CD4-positive, alpha-beta T cell (primary cell): ENCODE measurements at regions of chr13 and their contacts with region 1.

Region 1: DNA sequence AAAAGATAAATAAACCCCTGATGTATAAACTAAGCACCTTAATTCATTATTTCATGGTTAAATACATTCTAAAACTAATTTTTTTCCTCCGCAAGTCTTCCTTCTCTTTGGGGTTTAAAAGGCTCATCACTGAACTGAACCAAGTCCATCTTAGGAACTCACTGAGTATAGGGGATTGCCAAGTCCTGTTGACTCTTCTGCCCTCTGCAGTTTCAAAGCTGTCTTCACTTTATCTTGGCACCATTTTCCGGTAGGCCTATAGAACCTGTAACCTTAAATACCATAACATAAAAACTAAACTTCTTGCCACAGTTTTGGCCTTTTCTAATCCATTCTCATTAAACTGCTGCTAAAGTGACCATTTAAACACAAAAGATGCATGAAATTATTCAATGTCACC is 66.5 kb upstream of the USPL1 start:
- DNase-seq: peak in 4 of 14 experiments; percentile 34 to 66 (median 57)
- ATAC-seq: peak; percentile 95
- H3K4me3 ChIP-seq: no peak overlapping the region
- H3K4me3 Mint-ChIP-seq: no peak overlapping the region
- H3K27ac ChIP-seq: no peak overlapping the region
- H3K27ac Mint-ChIP-seq: no peak overlapping the region
- H3K4me1 ChIP-seq: no peaks in the 10 kb centered on the region
- H3K4me1 Mint-ChIP-seq: peaks cover 3% of the 10 kb centered on the region
- H3K27me3 ChIP-seq: no peaks in the 10 kb centered on the region
- H3K27me3 Mint-ChIP-seq: no peaks in the 10 kb centered on the region
- CTCF ChIP-seq: peak; percentile 51

Region 2: GRCh38 chr13:30257468-30258099 is 293.6 kb before region 1 on chr13:
- CTCF ChIA-PET with region 1: no interaction called
- POLR2A ChIA-PET with region 1: no interaction called
- intact Hi-C with region 1: loop called in 1 of 2 experiments (anchors 5 kb)
- DNase-seq: no peak
- ATAC-seq: no peak
- H3K4me3 ChIP-seq: no peak overlapping the region
- H3K4me3 Mint-ChIP-seq: no peak overlapping the region
- H3K27ac ChIP-seq: no peak overlapping the region
- H3K27ac Mint-ChIP-seq: no peak overlapping the region
- H3K4me1 ChIP-seq: peaks cover 3% of the 10 kb centered on the region
- H3K4me1 Mint-ChIP-seq: peaks cover 17% of the 10 kb centered on the region
- H3K27me3 ChIP-seq: no peaks in the 10 kb centered on the region
- H3K27me3 Mint-ChIP-seq: no peaks in the 10 kb centered on the region
- CTCF ChIP-seq: no peak

Region 3: DNA sequence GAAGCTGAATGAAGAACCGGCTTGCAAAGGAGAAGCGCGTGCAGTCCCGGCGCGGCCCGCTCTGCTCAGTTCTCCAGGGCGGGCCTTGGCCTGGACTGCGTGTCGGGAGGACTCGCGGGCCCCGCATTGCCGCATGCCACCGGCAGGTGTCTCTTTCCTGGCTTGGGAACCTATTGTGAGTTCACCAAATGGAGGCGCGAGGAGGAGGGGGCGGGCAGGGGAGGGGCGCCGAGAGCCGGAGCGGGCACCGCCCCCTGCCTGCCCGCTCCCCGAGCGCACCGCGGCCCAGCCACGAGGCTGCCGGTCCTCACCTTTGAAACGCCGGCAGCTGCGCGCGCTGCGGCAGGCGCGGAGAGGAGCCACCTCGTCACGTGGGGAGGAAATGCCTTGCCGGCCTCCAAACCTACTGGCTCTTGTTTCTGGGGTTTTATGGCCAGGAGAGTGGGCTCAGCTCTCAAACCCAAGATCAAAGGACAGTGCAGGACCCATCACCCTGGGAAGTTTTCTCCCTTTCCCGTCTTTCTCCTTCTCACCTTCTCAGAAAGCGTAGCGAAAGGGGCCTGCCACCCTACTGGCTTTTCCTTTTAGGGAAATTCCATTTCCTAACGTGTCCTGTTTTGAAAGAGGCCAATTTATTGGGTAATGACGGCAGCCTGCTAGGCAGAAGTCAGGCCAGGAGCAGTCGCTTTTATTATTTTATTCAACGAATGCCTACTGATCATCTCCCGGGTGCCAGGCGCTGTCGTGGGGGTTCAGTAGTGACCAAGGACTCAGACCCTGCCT is 142.7 kb before region 1 on chr13:
- CTCF ChIA-PET with region 1: no interaction called
- POLR2A ChIA-PET with region 1: no interaction called
- intact Hi-C with region 1: loop called (anchors 1 to 5 kb)
- DNase-seq: peak; percentile 83 to 96 (median 88)
- ATAC-seq: peak; percentile 91
- H3K4me3 ChIP-seq: peak overlapping the region; percentile 37
- H3K4me3 Mint-ChIP-seq: peak overlapping the region; percentile 76
- H3K27ac ChIP-seq: peak overlapping the region in 1 of 2 donors; percentile 76
- H3K27ac Mint-ChIP-seq: peak overlapping the region; percentile 78
- H3K4me1 ChIP-seq: peaks cover 20% of the 10 kb centered on the region
- H3K4me1 Mint-ChIP-seq: peaks cover 40% of the 10 kb centered on the region
- H3K27me3 ChIP-seq: no peaks in the 10 kb centered on the region
- H3K27me3 Mint-ChIP-seq: no peaks in the 10 kb centered on the region
- CTCF ChIP-seq: peak; percentile 63

Region 4: DNA sequence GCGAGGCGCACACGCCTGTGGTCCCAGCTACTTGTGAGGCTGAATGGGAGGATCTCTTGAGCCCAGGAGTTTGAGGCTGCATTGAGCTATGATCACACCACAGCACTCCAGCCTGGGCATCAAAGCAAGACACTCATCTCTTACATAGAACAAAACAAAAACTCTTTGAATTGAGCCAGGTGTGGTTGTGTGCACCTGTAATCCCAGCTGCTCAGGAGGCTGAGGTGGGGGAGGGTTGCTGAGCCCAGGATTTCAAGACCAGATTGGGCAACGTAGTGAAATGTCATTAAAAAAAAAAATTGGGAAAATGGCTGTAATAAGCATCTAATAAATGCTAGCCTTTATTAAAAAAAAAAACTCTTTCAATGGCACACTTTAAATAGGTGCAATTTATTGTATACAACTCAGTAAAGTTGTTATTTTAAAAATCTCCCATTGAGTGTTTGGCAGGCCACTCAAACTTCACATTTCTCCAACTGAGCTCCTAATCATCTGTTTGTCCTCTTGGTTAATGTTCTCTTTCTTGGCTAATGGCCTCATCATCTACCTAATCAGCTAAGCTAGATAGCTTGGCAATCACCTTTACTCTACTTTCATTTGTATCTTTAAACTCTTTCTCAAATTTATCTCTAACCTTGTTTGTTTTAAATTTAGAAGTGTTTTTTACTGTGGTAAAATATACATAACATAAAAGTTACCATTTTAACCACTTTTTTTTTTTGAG is 57.4 kb before region 1 on chr13:
- CTCF ChIA-PET with region 1: no interaction called
- POLR2A ChIA-PET with region 1: no interaction called
- intact Hi-C with region 1: no loop called
- DNase-seq: no peak
- ATAC-seq: no peak
- H3K4me3 ChIP-seq: no peak overlapping the region
- H3K4me3 Mint-ChIP-seq: no peak overlapping the region
- H3K27ac ChIP-seq: no peak overlapping the region
- H3K27ac Mint-ChIP-seq: no peak overlapping the region
- H3K4me1 ChIP-seq: no peaks in the 10 kb centered on the region
- H3K4me1 Mint-ChIP-seq: no peaks in the 10 kb centered on the region
- H3K27me3 ChIP-seq: no peaks in the 10 kb centered on the region
- H3K27me3 Mint-ChIP-seq: no peaks in the 10 kb centered on the region
- CTCF ChIP-seq: no peak